T-cell (primary cell): ENCODE measurements at regions of chr2 and their contacts with region 1.

Region 1: DNA sequence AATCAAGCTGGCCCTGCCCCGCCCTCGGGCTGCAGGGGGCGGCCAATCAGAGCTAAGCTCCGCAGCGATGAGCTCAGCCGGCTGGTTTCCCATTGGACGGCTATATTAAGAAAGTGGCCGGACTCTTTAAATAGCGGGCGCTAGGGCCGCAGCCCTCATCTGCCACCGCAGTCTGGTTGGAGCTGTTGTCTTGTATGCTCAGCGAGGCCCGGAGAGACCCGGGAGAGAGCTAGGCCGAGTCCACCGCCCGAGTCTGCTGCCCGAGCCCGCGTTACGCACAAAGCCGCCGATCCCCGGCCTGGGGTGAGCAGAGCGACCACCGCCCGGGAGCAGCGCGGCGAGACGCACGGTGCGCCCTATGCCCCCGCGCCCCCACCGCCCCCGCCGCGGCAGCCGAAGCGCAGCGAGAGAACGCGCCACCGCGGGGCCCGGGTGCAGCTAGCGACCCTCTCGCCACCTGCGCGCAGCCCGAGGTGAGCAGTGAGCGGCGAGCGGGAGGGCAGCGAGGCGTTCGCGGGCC is at the start of gene RHOB:
- DNase-seq: peak; percentile 55 to 94 (median 81)
- ATAC-seq: peak; percentile 92 to 97 (median 96)
- H3K4me3 ChIP-seq: peak within 1 kb of the TSS; percentile 59 to 74
- H3K4me3 Mint-ChIP-seq: peak within 1 kb of the TSS; percentile 76 to 81 (median 78)
- H3K27ac ChIP-seq: peak within 1 kb of the TSS; percentile 44
- H3K27ac Mint-ChIP-seq: no peak within 1 kb of the TSS
- H3K4me1 ChIP-seq: peaks cover 0 to 21% of the 10 kb centered on the region in 2 experiments
- H3K4me1 Mint-ChIP-seq: peaks cover 0 to 12% (median 2%) of the 10 kb centered on the region in 3 donors
- H3K27me3 ChIP-seq: peaks cover 0 to 31% of the 10 kb centered on the region in 2 experiments
- H3K27me3 Mint-ChIP-seq: peaks cover under 1 to 29% of the 10 kb centered on the region in 2 donors
- total RNA-seq, gene RHOB: 11.4 to 42.4 (median 14.7) TPM

Region 2: GRCh38 chr2:20411361-20411894 is 35.5 kb before region 1 on chr2:
- CTCF ChIA-PET with region 1: interaction called, 8 to 18 read pairs
- POLR2A ChIA-PET with region 1: interaction called, 4 to 5 read pairs
- DNase-seq: peak; percentile 38 to 74 (median 61)
- ATAC-seq: peak; percentile 82 to 94 (median 88)
- H3K4me3 ChIP-seq: no peak overlapping the region
- H3K4me3 Mint-ChIP-seq: no peak overlapping the region
- H3K27ac ChIP-seq: no peak overlapping the region
- H3K27ac Mint-ChIP-seq: no peak overlapping the region
- H3K4me1 ChIP-seq: no peaks in the 10 kb centered on the region
- H3K4me1 Mint-ChIP-seq: no peaks in the 10 kb centered on the region
- H3K27me3 ChIP-seq: peaks cover 0 to 24% of the 10 kb centered on the region in 2 experiments
- H3K27me3 Mint-ChIP-seq: peaks cover 5 to 7% of the 10 kb centered on the region in 2 donors

Region 3: GRCh38 chr2:20642055-20642971 is 195.3 kb after region 1 on chr2:
- CTCF ChIA-PET with region 1: interaction called, 15 to 16 read pairs
- POLR2A ChIA-PET with region 1: interaction called, 3 to 5 read pairs
- DNase-seq: peak; percentile 37 to 84 (median 64)
- ATAC-seq: peak; percentile 87 to 99 (median 90)
- H3K4me3 ChIP-seq: no peak overlapping the region
- H3K4me3 Mint-ChIP-seq: no peak overlapping the region
- H3K27ac ChIP-seq: no peak overlapping the region
- H3K27ac Mint-ChIP-seq: no peak overlapping the region
- H3K4me1 ChIP-seq: peaks cover 0 to 8% of the 10 kb centered on the region in 2 experiments
- H3K4me1 Mint-ChIP-seq: peaks cover 6 to 11% (median 10%) of the 10 kb centered on the region in 3 donors
- H3K27me3 ChIP-seq: no peaks in the 10 kb centered on the region
- H3K27me3 Mint-ChIP-seq: no peaks in the 10 kb centered on the region

Region 4: GRCh38 chr2:20650880-20651730 is 204.1 kb after region 1 on chr2 and contains the start of gene HS1BP3:
- CTCF ChIA-PET with region 1: interaction called, 10 to 20 read pairs
- POLR2A ChIA-PET with region 1: interaction called, 3 to 22 read pairs
- DNase-seq: peak; percentile 73 to 97 (median 85)
- ATAC-seq: peak; percentile 92 to 98 (median 96)
- H3K4me3 ChIP-seq: peak within 1 kb of the TSS; percentile 71 to 81
- H3K4me3 Mint-ChIP-seq: peak within 1 kb of the TSS; percentile 83 to 91 (median 87)
- H3K27ac ChIP-seq: peak within 1 kb of the TSS; percentile 93
- H3K27ac Mint-ChIP-seq: peak within 1 kb of the TSS; percentile 94 to 96
- H3K4me1 ChIP-seq: peaks cover 4 to 30% of the 10 kb centered on the region in 2 experiments
- H3K4me1 Mint-ChIP-seq: peaks cover 32 to 42% (median 36%) of the 10 kb centered on the region in 3 donors
- H3K27me3 ChIP-seq: no peaks in the 10 kb centered on the region
- H3K27me3 Mint-ChIP-seq: peaks cover 0 to 4% of the 10 kb centered on the region in 2 donors
- total RNA-seq, gene HS1BP3: 11.1 to 20.7 (median 17.2) TPM